Esophagus muscularis mucosa (tissue), 4 donors: ENCODE measurements at regions of chr15 and their contacts with region 1.

Region 1: DNA sequence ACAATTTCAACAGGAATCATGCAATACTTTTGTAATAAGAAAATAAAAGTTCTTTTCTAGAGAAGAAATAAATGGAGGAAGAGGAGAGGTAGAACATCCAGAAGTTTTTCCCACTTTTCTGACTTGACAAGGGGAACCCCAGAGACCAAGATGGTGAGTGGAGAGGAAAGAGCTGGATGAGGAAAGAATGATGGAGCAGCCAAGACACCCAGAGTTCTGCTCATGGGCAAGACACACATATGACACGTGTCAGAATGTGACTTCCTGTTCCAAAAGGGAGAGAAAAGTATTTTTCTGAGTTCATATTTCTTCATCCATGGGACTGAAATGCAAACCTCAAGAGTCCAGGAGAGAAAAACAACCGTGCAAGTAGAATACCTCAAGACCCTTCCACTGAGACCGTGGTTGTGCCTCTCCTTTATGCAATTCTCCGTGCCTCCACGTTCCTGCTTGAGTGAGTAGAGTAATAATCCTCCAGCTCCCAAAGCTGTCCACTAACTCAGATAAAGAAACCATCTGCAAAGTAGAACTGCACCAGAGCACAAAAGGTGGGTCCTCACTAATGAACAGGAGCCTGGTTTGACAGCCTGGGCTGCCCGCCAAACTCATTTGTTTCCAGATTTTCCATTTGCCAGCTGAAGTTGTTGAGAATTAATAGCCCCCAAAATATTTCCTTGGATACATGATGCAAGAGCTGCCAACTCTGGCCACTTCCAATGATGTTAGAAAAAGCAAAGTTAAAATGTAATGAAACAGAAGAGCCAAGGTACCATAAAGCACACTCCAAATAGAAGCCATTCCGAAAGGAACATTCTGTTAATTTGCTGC is 272.6 kb upstream of the IGF1R start:
- DNase-seq: no peak
- H3K4me3 ChIP-seq: peak overlapping the region in 3 of 4 donors; percentile 2 to 21 (median 18)
- H3K27ac ChIP-seq: peak overlapping the region; percentile 43 to 58 (median 46)
- H3K4me1 ChIP-seq: peaks cover 0 to 21% (median 11%) of the 10 kb centered on the region in 4 donors
- H3K27me3 ChIP-seq: no peaks in the 10 kb centered on the region
- CTCF ChIP-seq: no peak
- EP300 ChIP-seq: no peak
- POLR2A ChIP-seq: no peak

Region 2: DNA sequence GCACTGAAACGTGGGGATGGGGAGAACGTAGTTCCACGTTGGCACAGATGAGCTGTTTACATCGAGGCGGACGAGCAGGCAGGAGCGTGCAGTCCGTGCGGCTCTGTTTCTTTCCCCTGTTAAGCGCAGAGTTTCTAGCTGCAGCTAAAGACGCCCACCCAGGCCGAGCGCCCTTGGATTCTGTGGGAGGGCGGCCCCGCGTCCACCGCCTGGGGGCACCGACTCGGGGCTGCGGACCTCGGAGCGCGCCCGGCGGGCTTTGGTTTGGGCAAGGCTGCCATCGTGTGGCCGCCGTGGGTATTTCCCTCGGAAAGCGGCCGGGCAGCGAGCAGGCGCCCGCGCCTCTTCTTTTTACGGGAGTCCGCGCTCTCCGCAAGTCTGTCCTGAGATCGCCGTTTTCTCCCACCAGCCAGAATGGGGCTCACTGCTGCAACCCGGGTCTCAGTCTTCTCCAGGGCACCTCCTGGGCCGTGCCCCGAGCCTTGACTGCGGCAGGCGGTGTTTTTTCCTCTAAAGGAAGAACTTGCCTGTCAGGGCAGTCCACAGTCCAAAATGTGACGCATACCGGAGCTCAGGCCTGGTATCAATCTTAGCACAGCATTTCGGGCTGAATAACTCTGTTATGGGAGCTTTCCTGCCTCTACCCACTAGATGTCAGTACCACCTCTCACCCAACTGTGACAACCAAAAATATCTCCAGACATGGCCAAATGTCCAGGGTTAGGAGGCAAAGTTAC is 52.7 kb after region 1 on chr15:
- intact Hi-C with region 1: loop called (anchors 5 kb)
- DNase-seq: no peak
- H3K4me3 ChIP-seq: peak overlapping the region; percentile 46 to 59 (median 48)
- H3K27ac ChIP-seq: peak overlapping the region; percentile 69 to 78 (median 74)
- H3K4me1 ChIP-seq: peaks cover 0 to 22% (median 18%) of the 10 kb centered on the region in 4 donors
- H3K27me3 ChIP-seq: peaks cover 0 to 9% (median 0%) of the 10 kb centered on the region in 4 donors
- CTCF ChIP-seq: peak; percentile 87 to 94 (median 93)
- EP300 ChIP-seq: no peak
- POLR2A ChIP-seq: no peak